H1 (cell line): ENCODE measurements at regions of chr6 and their contacts with region 1.

Region 1: GRCh38 chr6:43951063-43951755 is 176.0 kb downstream of the MRPL14 start:
- DNase-seq: peak; percentile 56 to 85
- H3K4me3 ChIP-seq: no peak overlapping the region
- H3K27ac ChIP-seq: no peak overlapping the region
- H3K4me1 ChIP-seq: peaks cover 0 to 5% (median 1%) of the 10 kb centered on the region in 4 experiments; a peak in 3 of 7 replicates
- H3K27me3 ChIP-seq: no peaks in the 10 kb centered on the region
- CTCF ChIP-seq: peak; percentile 96 to 98 (median 98)
- EP300 ChIP-seq: no peak
- POLR2A ChIP-seq: no peak
- RAD21 ChIP-seq: peak; percentile 98

Region 2: GRCh38 chr6:43427406-43428111 is 523.6 kb before region 1 on chr6 and contains the start of gene ABCC10:
- CTCF ChIA-PET with region 1: no interaction called
- POLR2A ChIA-PET with region 1: no interaction called
- DNase-seq: peak; percentile 79 to 99
- H3K4me3 ChIP-seq: peak within 1 kb of the TSS; percentile 81 to 85 (median 84)
- H3K27ac ChIP-seq: peak within 1 kb of the TSS; percentile 55; the same call in 1 of the 2 replicates
- H3K4me1 ChIP-seq: peaks cover 0 to 6% (median 2%) of the 10 kb centered on the region in 4 experiments; a peak in 2 of 7 replicates
- H3K27me3 ChIP-seq: no peaks in the 10 kb centered on the region
- CTCF ChIP-seq: peak; percentile 2 to 29 (median 29); a peak in 3 of 4 replicates
- EP300 ChIP-seq: no peak
- POLR2A ChIP-seq: peak in 1 of 2 experiments; percentile 47; a peak in 1 of 3 replicates
- RAD21 ChIP-seq: no peak
- total RNA-seq, gene ABCC10: 21.0 and 24.6 TPM in 2 replicates

Region 3: DNA sequence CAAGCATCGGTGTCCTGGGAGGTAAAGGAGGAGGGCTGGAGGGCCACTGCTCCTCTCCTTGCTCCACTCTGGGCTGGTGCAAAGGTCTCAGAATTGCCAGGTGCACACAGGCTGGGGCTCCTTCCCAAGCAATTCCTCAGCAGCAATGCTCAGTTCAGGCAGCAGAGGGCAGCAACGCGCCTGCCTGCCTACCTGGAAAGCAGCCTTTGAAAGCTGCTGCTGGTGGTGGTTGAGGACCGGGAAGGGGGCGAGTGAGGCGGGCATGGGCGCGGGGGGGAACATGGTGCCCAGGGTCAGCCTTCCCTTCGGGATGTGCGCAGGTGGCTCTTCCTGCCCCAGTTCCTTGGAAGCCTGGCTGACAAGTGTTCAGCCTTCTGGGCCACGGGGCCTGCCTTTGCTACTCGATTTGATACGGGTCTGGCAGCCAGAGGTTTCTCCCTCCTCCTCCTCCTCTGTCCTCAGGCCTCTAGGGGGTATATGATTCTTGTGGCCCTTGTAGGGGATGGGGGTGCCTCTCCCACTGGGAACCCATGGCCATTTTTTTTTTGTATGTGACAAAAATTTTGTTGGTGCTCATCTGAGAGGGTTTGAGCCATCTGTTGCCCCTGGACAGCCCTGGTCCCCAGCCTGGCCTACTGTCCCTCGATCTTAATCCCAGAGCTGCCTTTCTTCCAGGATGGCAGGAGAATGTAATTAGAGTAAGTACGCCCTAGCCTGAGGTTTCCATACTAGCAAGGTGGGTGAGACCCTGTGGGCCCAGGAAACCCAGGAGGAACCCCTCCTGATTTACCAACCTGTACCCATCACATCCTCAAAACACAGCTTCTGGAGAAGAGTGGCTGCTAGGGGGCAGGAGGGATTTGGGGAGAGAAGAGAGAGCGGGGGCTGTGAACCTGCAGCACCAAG is 283.7 kb before region 1 on chr6:
- CTCF ChIA-PET with region 1: interaction called, 22 read pairs
- POLR2A ChIA-PET with region 1: interaction called, 6 read pairs
- DNase-seq: peak; percentile 68 to 97
- H3K4me3 ChIP-seq: peak overlapping the region in 3 of 4 experiments; percentile 11 to 48 (median 23); a peak in 4 of 8 replicates
- H3K27ac ChIP-seq: no peak overlapping the region
- H3K4me1 ChIP-seq: peaks cover 5 to 27% (median 22%) of the 10 kb centered on the region in 4 experiments
- H3K27me3 ChIP-seq: no peaks in the 10 kb centered on the region; a peak in 2 of 7 replicates
- CTCF ChIP-seq: peak in 2 of 3 experiments; percentile 94 to 99; a peak in 3 of 4 replicates
- EP300 ChIP-seq: no peak
- POLR2A ChIP-seq: no peak
- RAD21 ChIP-seq: peak; percentile 94 to 95

Region 4: DNA sequence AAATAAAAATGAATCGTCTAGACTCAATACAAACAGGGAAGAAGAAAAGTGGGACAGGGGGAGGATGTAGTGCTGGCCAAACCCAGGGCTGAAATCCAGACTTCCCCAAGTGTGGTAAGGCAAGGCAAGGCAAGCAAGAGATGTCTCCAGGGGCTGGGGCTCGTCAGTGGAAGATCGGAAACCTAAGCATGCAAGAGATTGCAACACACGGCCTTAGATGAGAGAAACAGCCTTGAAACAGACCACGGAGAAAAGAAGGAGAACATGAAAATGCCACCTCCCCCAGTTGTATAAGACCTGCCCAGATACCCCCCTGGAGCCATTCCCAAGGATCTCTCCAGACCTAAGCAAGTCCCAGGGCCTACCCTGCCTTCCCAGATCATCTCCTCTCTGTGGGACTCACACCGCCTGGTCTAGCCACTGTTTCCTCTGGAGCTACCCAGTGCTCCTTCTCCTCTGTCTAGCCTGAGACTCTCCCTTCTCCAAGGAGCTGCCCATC is 161.1 kb before region 1 on chr6:
- CTCF ChIA-PET with region 1: interaction called, 14 read pairs
- POLR2A ChIA-PET with region 1: interaction called, 7 read pairs
- DNase-seq: no peak
- H3K4me3 ChIP-seq: no peak overlapping the region
- H3K27ac ChIP-seq: no peak overlapping the region
- H3K4me1 ChIP-seq: no peaks in the 10 kb centered on the region
- H3K27me3 ChIP-seq: no peaks in the 10 kb centered on the region
- CTCF ChIP-seq: no peak
- EP300 ChIP-seq: no peak
- POLR2A ChIP-seq: no peak
- RAD21 ChIP-seq: no peak

Region 5: GRCh38 chr6:43856005-43856765 is 95.0 kb before region 1 on chr6:
- CTCF ChIA-PET with region 1: interaction called, 79 read pairs
- POLR2A ChIA-PET with region 1: no interaction called
- DNase-seq: no peak
- H3K4me3 ChIP-seq: no peak overlapping the region
- H3K27ac ChIP-seq: no peak overlapping the region
- H3K4me1 ChIP-seq: peaks cover 0 to 6% (median 3%) of the 10 kb centered on the region in 4 experiments; a peak in 4 of 7 replicates
- H3K27me3 ChIP-seq: no peaks in the 10 kb centered on the region
- CTCF ChIP-seq: peak; percentile 42 to 71 (median 57); a peak in 3 of 4 replicates
- EP300 ChIP-seq: no peak
- POLR2A ChIP-seq: no peak
- RAD21 ChIP-seq: peak; percentile 35 to 58; a peak in 3 of 4 replicates

Region 6: DNA sequence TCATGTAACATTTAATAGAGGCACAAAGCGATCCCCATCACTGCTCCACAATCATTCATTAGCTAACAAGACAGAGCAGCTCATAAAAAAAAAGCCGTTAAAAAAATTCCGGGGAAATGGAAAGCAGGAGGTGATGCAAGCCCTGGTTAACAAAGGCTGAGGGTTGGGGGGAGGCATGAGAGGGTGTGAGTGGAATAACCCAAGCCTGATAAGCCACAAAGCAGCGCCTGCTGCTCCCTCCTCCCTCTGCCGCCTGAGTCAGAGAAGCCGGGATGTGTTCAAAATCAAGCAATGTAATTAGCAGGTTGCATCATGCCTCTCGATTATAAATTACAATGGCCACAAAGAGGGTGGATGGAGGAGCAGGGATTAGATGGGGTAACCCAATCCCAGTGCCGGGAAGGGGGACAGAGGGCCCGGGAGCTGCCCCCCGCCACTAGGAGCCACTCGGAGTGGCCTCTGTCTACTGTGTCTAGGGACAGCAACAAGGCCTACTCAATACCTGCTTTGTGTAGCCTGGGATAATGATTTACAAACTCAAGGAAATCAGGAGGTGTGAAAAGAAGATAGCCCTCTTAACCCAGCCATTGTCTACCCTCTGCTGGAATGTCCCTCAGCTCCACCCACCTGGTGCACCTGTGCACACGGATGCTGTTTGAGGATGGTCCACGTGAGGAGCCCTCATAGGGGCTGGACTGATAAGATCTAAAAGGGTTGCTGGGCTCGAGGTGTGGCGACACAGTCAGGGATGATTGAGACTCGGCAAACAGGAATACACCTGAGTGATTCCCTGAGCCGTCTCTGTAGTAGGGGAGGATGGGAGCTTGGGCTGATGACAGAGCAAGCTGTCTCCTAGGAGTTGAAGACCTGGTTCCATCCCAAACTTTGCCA is 24.3 kb before region 1 on chr6:
- CTCF ChIA-PET with region 1: interaction called, 142 read pairs
- POLR2A ChIA-PET with region 1: interaction called, 11 read pairs
- DNase-seq: peak in 1 of 2 experiments; percentile 62
- H3K4me3 ChIP-seq: no peak overlapping the region
- H3K27ac ChIP-seq: no peak overlapping the region; the same call in 1 of the 2 replicates
- H3K4me1 ChIP-seq: peaks cover 0 to 10% (median 5%) of the 10 kb centered on the region in 4 experiments; a peak in 5 of 7 replicates
- H3K27me3 ChIP-seq: no peaks in the 10 kb centered on the region
- CTCF ChIP-seq: peak in 1 of 3 experiments; percentile 6; a peak in 1 of 4 replicates
- EP300 ChIP-seq: peak in 1 of 2 experiments; percentile 23; a peak in 1 of 3 replicates
- POLR2A ChIP-seq: no peak; a peak in 1 of 3 replicates
- RAD21 ChIP-seq: no peak

Region 7: DNA sequence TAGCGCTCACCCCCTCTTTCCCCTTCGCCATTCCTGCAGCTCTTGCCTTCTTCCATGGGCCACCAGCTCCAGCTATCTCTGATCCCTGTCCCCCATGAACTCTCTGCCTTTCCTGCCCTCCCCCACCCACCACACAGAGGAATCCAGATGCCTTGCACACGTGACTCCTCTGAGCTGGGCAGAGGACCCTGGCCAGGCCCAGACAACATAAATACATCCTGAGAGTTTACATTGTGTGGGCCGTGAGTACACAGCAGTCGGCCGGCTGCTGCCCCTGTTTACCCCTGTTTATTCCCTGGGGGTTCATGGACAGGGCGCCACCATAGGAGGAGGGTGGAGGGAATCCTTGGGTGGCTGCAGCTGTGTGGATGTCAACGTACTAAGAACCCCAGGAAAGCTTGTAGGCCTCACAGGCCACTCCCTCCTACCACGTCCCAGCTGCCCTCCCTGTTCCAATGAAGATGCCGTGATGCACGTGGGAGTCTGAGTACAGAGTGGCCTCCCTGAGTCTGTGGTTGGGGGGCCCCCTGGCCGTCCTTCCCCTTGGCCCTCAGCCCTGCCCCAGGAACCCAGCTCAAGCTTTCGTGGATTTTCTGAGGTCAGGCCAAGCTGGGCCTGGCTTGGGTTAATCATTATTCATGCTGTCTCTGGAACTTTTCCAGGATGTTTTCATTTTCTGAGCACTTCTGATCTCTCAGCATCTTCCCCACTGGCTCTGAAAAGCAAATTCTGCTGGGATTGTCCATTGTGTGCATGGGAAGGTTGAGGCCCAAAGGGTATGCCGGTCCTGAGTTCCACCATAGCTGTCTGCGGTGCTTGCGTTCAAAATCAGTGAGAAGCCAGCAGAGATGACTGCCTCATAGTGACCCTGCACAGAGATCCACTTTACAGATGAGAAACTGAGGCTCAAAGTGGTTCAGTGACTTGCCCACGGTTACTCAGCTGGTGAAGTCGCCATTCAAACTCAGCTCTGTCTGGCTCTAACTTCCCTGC is 39.7 kb after region 1 on chr6:
- CTCF ChIA-PET with region 1: interaction called, 82 read pairs
- POLR2A ChIA-PET with region 1: no interaction called
- DNase-seq: no peak
- H3K4me3 ChIP-seq: no peak overlapping the region
- H3K27ac ChIP-seq: no peak overlapping the region
- H3K4me1 ChIP-seq: peaks cover 0 to 16% (median 8%) of the 10 kb centered on the region in 4 experiments; a peak in 6 of 7 replicates
- H3K27me3 ChIP-seq: no peaks in the 10 kb centered on the region
- CTCF ChIP-seq: no peak
- EP300 ChIP-seq: no peak
- POLR2A ChIP-seq: no peak
- RAD21 ChIP-seq: no peak

Region 8: DNA sequence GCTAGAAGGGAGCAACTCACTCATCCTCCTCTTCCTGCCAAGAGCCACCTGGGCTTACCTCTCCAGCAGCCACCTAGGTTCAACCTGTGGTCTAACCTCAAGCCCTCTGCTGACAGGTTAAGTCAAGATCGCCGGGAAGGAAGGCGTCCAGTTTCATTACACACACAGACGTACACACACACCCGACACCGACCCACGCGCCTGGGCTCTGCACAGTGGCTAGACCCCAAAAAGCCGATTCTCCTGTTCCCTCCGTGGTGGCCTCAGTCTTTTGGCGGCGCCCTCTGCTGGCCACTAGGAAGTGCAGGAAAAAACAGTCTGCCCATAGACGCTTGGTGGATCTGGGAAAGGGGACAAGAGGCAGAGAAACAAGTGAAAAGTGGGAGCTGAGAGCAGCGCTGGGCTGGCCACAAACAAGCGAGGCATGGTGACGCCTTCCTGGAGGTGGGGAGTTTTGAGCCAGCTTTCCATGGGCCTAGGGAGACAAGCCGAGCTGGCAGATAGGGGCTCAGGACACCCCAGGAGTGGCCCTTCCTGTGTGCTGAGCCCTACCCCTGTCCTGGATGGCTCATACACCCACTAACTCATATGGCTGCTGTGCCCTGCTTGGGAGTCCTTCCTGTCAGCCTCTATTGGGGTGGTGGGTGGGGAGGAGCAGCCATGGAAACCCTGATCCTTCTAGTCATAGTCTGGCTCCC is 123.4 kb after region 1 on chr6:
- CTCF ChIA-PET with region 1: interaction called, 30 read pairs
- POLR2A ChIA-PET with region 1: interaction called, 4 read pairs
- DNase-seq: peak in 1 of 2 experiments; percentile 81
- H3K4me3 ChIP-seq: peak overlapping the region in 1 of 4 experiments; percentile 56; a peak in 1 of 8 replicates
- H3K27ac ChIP-seq: no peak overlapping the region
- H3K4me1 ChIP-seq: peaks cover 9 to 32% (median 26%) of the 10 kb centered on the region in 4 experiments
- H3K27me3 ChIP-seq: peaks cover 0 to 9% (median 2%) of the 10 kb centered on the region in 4 experiments; a peak in 4 of 7 replicates
- CTCF ChIP-seq: peak in 2 of 3 experiments; percentile 88 to 91; a peak in 3 of 4 replicates
- EP300 ChIP-seq: no peak
- POLR2A ChIP-seq: no peak
- RAD21 ChIP-seq: peak; percentile 67 to 77